Body of pancreas (tissue), 4 donors: ENCODE measurements at regions of chr3 and their contacts with region 1.

Region 1: DNA sequence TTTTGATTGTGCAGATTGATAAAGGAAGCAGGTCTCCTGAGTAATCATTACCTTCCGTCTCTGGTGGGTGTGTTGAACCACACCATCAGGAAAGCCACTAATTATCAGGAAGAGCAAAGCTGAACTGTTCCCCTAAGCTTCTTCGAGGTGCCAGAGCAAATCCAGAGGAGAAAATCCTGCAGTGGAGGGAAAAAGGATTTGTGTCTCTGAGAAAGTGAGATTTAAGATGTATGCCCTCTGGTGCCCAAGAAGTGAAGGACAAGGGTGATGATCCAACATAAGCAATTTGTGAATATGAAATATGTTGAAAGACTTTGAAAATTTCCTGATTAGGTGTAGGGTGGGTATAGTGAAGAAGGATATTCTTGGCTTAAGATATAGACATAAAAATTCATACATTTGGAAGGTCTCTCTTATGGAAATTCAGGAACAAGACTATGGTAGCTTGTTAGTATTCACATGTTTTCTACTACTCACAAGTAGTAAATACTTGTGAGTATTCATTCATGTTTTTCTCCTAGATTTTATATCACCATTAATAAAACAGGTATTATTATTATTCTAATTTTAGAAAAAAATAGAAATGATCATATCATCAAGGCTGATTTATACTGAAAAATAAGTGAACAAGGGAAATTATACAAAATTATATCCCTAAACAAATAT is 34.8 kb downstream of the COMMD2 start:
- DNase-seq: peak; percentile 53 to 67 (median 64)
- ATAC-seq: peak; percentile 79
- H3K4me3 ChIP-seq: no peak overlapping the region
- H3K27ac ChIP-seq: no peak overlapping the region
- H3K4me1 ChIP-seq: peaks cover 5% of the 10 kb centered on the region
- H3K27me3 ChIP-seq: no peaks in the 10 kb centered on the region
- CTCF ChIP-seq: peak in 6 of 7 experiments; percentile 60 to 88 (median 80)
- POLR2A ChIP-seq: peak in 1 of 3 donors; percentile 2

Region 2: GRCh38 chr3:149512209-149512782 is 205.2 kb before region 1 on chr3:
- intact Hi-C with region 1: loop called (anchors 10 kb)
- DNase-seq: peak; percentile 70 to 79 (median 77)
- ATAC-seq: peak; percentile 85
- H3K4me3 ChIP-seq: no peak overlapping the region
- H3K27ac ChIP-seq: no peak overlapping the region
- H3K4me1 ChIP-seq: peaks cover 21% of the 10 kb centered on the region
- H3K27me3 ChIP-seq: no peaks in the 10 kb centered on the region
- CTCF ChIP-seq: peak; percentile 54 to 87 (median 85)
- POLR2A ChIP-seq: no peak